ENCODE measurements at regions of chr12 and their contacts with region 1.

Region 1: DNA sequence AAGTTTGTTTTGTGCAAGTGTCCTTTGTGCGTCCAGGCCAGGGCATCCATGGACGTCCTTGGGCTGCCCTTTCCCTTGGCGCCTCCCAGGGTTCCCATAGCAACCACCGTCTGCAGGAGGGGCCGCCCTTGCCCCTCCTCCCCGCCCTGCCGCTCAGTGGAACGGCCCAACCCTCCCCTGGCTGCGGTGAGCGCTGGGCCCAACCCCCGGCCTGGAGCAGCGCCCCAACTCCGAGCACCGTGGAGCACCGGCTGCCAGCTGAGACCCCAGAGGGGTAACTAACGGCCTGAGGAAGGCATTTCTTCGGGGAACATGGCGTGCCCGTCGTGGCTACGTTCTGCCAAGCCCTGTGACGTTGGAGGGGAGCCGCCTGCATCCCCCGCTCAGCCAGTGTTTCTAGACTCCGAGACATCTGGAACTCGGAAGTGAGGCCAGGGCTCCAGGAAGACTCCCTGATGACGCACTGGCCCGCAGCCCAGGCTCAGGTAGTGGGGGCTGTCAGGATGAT is 5.3 kb upstream of the ACACB start:
- DNase-seq: peak; percentile 87
- H3K4me3 Mint-ChIP-seq: peak overlapping the region; percentile 75
- H3K27ac Mint-ChIP-seq: peak overlapping the region; percentile 48
- H3K4me1 Mint-ChIP-seq: peaks cover 10% of the 10 kb centered on the region
- H3K27me3 Mint-ChIP-seq: no peaks in the 10 kb centered on the region

Region 2: GRCh38 chr12:109247831-109248654 is 137.0 kb after region 1 on chr12:
- intact Hi-C with region 1: loop called (anchors 10 kb)
- DNase-seq: no peak
- H3K4me3 Mint-ChIP-seq: no peak overlapping the region
- H3K27ac Mint-ChIP-seq: no peak overlapping the region
- H3K4me1 Mint-ChIP-seq: peaks cover 4% of the 10 kb centered on the region
- H3K27me3 Mint-ChIP-seq: no peaks in the 10 kb centered on the region

Region 3: DNA sequence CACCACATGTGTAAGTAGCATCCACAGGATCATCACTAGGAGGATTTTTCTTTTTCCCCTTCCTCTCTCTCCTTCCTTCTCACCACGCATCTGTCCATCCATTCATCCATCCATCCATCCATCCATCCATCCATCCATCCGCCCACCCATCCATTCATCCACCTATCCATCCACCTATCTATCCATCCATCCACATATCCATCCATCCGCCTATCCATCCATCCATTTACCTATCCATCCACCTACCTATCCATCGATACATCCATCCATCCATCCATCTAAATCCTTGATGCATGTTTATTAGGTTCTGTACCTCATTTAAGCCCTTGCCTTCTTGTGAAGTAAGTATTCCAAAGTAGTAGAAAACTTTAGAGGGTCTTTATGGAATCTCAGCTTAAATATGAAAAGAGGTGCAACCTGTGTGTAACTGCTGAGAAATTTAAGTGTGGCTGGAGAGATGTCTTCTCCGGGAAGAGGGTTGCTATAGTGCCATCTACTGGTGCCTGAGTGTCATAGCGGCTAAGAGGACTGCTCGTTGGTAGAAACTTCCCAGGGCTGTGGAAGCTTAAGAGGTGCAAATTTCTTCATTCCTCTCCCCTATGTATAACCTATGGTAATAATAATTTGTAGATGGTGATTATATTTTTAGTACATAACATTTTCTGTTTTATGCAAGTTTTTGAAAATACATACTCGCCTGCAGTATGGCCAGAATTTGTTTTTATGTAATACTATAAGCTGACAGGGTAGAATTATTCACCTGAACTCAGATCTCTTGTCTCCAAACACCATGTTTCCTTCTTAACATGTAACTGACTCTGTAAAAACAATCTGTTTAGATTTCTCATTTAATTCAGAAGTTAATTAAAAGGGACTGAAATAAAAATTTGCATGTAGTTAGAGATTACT is 282.6 kb after region 1 on chr12:
- intact Hi-C with region 1: loop called (anchors 2 kb)
- DNase-seq: peak; percentile 81
- H3K4me3 Mint-ChIP-seq: no peak overlapping the region
- H3K27ac Mint-ChIP-seq: no peak overlapping the region
- H3K4me1 Mint-ChIP-seq: no peaks in the 10 kb centered on the region
- H3K27me3 Mint-ChIP-seq: peaks cover 15% of the 10 kb centered on the region